ENCODE measurements at regions of chr5 and their contacts with region 1.

Region 1: DNA sequence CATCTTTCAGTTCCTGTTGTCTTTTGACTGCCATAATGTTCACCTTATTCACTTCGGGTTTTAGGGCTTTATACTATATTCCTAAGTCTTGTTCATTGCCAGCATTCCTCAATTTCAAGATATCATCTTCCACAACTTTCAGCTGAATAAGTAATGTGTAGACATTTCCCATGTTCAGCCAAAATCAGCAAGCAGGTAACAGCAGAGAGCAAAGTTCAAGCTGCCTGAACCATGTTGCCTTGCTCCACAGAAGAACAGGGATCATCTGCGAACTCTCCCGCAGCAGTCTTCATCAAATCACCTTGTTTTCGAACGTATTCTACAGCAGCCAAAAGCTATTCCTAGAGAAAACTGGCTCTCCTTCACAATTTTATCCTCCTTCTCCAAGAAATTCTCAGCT is 95.3 kb upstream of the CCDC112 start:
- DNase-seq: no peak
- H3K4me3 Mint-ChIP-seq: no peak overlapping the region
- H3K27ac Mint-ChIP-seq: no peak overlapping the region
- H3K4me1 Mint-ChIP-seq: no peaks in the 10 kb centered on the region
- H3K27me3 Mint-ChIP-seq: peaks cover 4% of the 10 kb centered on the region

Region 2: GRCh38 chr5:115366223-115366622 is 25.6 kb before region 1 on chr5:
- CTCF ChIA-PET with region 1: no interaction called
- intact Hi-C with region 1: no loop called
- DNase-seq: no peak
- H3K4me3 Mint-ChIP-seq: no peak overlapping the region
- H3K27ac Mint-ChIP-seq: no peak overlapping the region
- H3K4me1 Mint-ChIP-seq: no peaks in the 10 kb centered on the region
- H3K27me3 Mint-ChIP-seq: no peaks in the 10 kb centered on the region

Region 3: GRCh38 chr5:115423541-115423940 is 31.8 kb after region 1 on chr5:
- CTCF ChIA-PET with region 1: no interaction called
- intact Hi-C with region 1: loop called (anchors 1 kb)
- DNase-seq: no peak
- H3K4me3 Mint-ChIP-seq: no peak overlapping the region
- H3K27ac Mint-ChIP-seq: no peak overlapping the region
- H3K4me1 Mint-ChIP-seq: peaks cover 2% of the 10 kb centered on the region
- H3K27me3 Mint-ChIP-seq: peaks cover 14% of the 10 kb centered on the region

Region 4: GRCh38 chr5:117255211-117256027 is 1863.6 kb after region 1 on chr5:
- CTCF ChIA-PET with region 1: no interaction called
- intact Hi-C with region 1: no loop called
- DNase-seq: no peak
- H3K4me3 Mint-ChIP-seq: no peak overlapping the region
- H3K27ac Mint-ChIP-seq: no peak overlapping the region
- H3K4me1 Mint-ChIP-seq: no peaks in the 10 kb centered on the region
- H3K27me3 Mint-ChIP-seq: no peaks in the 10 kb centered on the region

Measured in activated naive CD4-positive, alpha-beta T cell treated with anti-CD3 and anti-CD28 coated beads for 36 hours (primary cell).